ENCODE measurements at regions of chr13 and their contacts with region 1.

Region 1: GRCh38 chr13:102913914-102914313 is 68.1 kb downstream of the ERCC5 start:
- DNase-seq: no peak
- ATAC-seq: no peak
- H3K4me3 ChIP-seq: no peak overlapping the region
- H3K27ac ChIP-seq: no peak overlapping the region
- H3K4me1 ChIP-seq: peaks cover 0 to 14% (median 5%) of the 10 kb centered on the region in 9 donors
- H3K27me3 ChIP-seq: no peaks in the 10 kb centered on the region
- CTCF ChIP-seq: no peak

Region 2: DNA sequence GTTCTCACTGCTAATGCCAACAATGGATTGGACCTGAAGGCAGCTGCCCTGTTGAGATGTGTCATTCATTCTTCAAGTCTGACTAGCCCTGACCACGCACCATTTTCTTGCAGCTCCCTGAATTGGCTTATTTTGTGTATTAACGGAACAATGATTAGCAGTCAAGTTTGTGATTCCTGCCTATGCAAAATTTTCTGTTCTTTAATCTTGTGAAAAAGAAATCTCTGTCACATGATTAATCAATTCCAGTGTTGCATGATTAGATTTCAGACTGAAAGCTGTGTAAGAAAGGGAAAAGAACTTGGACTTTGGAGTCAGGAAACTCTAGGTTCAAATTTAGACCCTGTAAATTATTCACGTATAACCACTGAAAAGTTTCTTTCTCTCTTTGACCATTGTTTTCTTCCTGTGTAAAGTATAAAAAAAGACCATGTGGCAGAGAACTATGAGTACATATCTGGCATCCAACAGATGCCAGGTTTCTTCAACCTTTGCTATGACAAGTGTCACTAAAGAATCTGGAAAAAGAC is 216.8 kb after region 1 on chr13:
- intact Hi-C with region 1: loop called in 1 of 10 experiments (anchors 10 kb)
- DNase-seq: no peak
- ATAC-seq: no peak
- H3K4me3 ChIP-seq: no peak overlapping the region
- H3K27ac ChIP-seq: no peak overlapping the region
- H3K4me1 ChIP-seq: no peaks in the 10 kb centered on the region
- H3K27me3 ChIP-seq: no peaks in the 10 kb centered on the region
- CTCF ChIP-seq: no peak

Region 3: GRCh38 chr13:103140001-103140671 is 226.2 kb after region 1 on chr13:
- intact Hi-C with region 1: loop called in 3 of 10 experiments (anchors 5 to 10 kb)
- DNase-seq: no peak
- ATAC-seq: no peak
- H3K4me3 ChIP-seq: no peak overlapping the region
- H3K27ac ChIP-seq: no peak overlapping the region
- H3K4me1 ChIP-seq: no peaks in the 10 kb centered on the region
- H3K27me3 ChIP-seq: no peaks in the 10 kb centered on the region
- CTCF ChIP-seq: peak; percentile 15 to 52 (median 42)

Measured in heart right ventricle (tissue), 16 donors.